Gastrocnemius medialis (tissue), 4 donors: ENCODE measurements at regions of chr12 and their contacts with region 1.

Region 1: DNA sequence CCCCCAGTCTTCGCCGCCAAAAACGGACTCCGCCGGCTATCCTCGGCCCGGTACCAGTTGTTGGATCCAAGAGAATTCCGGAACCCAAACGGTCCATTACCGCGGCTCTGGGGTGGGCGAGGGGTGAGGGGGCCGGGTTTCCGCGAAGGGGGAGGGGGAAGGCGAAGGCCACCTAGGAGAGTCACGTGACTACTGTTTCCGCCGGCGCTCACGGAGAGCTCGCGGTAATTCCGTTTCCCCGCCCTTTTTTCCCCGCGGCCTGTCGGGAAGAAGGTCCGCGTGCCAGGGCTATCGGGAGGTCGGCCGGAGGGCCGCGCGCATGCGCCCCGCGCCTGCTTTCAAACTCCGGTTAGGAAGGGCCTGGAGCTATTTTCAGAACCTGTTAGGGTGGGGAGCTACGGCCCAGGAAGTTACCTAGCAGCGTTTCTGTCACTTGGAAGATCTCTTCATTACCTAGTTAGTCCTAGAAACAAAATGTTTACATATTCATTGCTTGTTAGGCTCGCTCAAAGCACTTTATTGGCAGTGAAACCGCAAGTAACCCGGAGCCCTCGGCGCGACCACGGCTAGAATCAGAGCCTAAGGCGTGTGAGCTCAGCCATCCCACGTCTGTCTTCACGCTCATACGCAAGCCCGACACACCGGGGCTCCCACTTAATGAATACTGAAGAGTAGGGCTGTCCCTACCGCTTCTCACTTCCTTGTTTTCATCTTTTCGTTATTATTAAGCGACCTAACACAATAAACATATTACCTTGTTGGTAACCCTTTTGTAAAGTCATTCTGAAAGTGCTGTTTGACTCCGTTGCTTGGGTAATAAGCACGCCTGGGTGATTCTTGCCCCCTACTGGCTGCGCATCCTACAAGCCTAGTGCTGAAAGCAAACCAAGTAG is 624 bp upstream of the SBNO1 start:
- DNase-seq: peak; percentile 99
- ATAC-seq: peak; percentile 88 to 89
- H3K4me3 ChIP-seq: peak overlapping the region; percentile 74 to 84 (median 79)
- H3K27ac ChIP-seq: peak overlapping the region; percentile 89 to 99 (median 94)
- H3K4me1 ChIP-seq: peaks cover 7 to 24% of the 10 kb centered on the region in 2 donors
- H3K27me3 ChIP-seq: no peaks in the 10 kb centered on the region
- CTCF ChIP-seq: peak; percentile 54 to 81 (median 75)
- POLR2A ChIP-seq: peak; percentile 79 to 84

Region 2: GRCh38 chr12:122974274-122974891 is 390.9 kb before region 1 on chr12:
- in situ Hi-C with region 1: no loop called
- intact Hi-C with region 1: loop called (anchors 10 kb)
- DNase-seq: peak; percentile 97
- ATAC-seq: peak; percentile 97 to 98
- H3K4me3 ChIP-seq: peak overlapping the region; percentile 85 to 100 (median 91)
- H3K27ac ChIP-seq: peak overlapping the region; percentile 96 to 100 (median 98)
- H3K4me1 ChIP-seq: peaks cover 24 to 37% of the 10 kb centered on the region in 2 donors
- H3K27me3 ChIP-seq: no peaks in the 10 kb centered on the region
- CTCF ChIP-seq: peak in 1 of 5 experiments; percentile 12
- POLR2A ChIP-seq: no peak

Region 3: DNA sequence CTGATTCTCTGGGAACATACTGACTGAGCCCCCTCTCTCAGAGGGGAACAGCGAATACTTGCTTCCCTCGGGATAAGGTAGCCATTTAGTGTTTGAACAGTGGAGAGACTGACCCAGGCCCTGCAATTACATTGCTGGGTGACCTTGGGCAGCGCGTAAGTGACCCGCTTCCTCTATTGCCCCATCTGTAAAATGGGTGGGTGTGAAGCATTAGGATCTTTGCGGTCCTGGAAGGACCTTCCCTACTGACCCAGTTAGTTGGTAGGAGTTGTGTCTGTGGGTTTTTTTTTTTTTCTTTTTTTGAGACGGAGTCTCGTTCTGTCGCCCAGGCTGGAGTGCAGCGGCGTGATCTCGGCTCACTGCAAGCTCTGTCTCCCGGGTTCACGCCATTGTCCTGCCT is 17.4 kb after region 1 on chr12:
- in situ Hi-C with region 1: no loop called
- intact Hi-C with region 1: loop called (anchors 1 kb)
- DNase-seq: no peak
- ATAC-seq: no peak
- H3K4me3 ChIP-seq: no peak overlapping the region
- H3K27ac ChIP-seq: no peak overlapping the region
- H3K4me1 ChIP-seq: peaks cover 15 to 22% of the 10 kb centered on the region in 2 donors
- H3K27me3 ChIP-seq: no peaks in the 10 kb centered on the region
- CTCF ChIP-seq: no peak
- POLR2A ChIP-seq: no peak

Region 4: GRCh38 chr12:123457980-123458783 is 92.9 kb after region 1 on chr12 and contains the start of gene SNRNP35:
- in situ Hi-C with region 1: no loop called
- intact Hi-C with region 1: loop called (anchors 5 kb)
- DNase-seq: peak; percentile 48 to 71
- ATAC-seq: peak; percentile 86
- H3K4me3 ChIP-seq: peak within 1 kb of the TSS; percentile 63 to 98 (median 89)
- H3K27ac ChIP-seq: peak within 1 kb of the TSS; percentile 86 to 99 (median 98)
- H3K4me1 ChIP-seq: peaks cover 8 to 12% of the 10 kb centered on the region in 2 donors
- H3K27me3 ChIP-seq: no peaks in the 10 kb centered on the region
- CTCF ChIP-seq: no peak
- POLR2A ChIP-seq: peak; percentile 51 to 55
- total RNA-seq, gene SNRNP35: 22.6 to 40.4 (median 23.5) TPM

Region 5: DNA sequence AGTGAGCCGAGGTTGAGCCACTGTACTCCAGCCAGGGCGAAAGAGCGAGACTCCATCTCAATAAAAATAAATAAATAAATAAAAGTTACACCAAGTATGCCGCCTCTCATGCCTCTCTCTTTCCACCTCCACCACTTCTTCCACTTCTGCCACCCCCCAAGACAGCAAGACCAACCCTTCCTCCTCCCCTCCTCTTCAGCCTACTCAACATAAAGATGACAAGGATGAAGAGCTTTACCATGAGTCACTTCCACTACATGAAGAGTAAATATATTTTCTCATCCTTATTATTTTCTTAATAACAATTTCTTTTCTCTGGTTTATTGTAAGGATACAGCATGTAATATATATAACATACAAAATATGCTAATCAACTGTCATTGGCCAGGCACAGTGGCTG is 215.5 kb after region 1 on chr12:
- in situ Hi-C with region 1: loop called in 1 of 4 experiments (anchors 5 kb)
- intact Hi-C with region 1: loop called (anchors 1 kb)
- DNase-seq: no peak
- ATAC-seq: no peak
- H3K4me3 ChIP-seq: no peak overlapping the region
- H3K27ac ChIP-seq: peak overlapping the region in 2 of 4 donors; percentile 28 to 95
- H3K4me1 ChIP-seq: peaks cover 23 to 28% of the 10 kb centered on the region in 2 donors
- H3K27me3 ChIP-seq: no peaks in the 10 kb centered on the region
- CTCF ChIP-seq: no peak
- POLR2A ChIP-seq: no peak

Region 6: GRCh38 chr12:123713398-123713797 is 348.1 kb after region 1 on chr12:
- in situ Hi-C with region 1: no loop called
- intact Hi-C with region 1: loop called (anchors 5 kb)
- DNase-seq: no peak
- ATAC-seq: no peak
- H3K4me3 ChIP-seq: peak overlapping the region; percentile 77 to 98 (median 96)
- H3K27ac ChIP-seq: no peak overlapping the region
- H3K4me1 ChIP-seq: peaks cover 27 to 28% of the 10 kb centered on the region in 2 donors
- H3K27me3 ChIP-seq: no peaks in the 10 kb centered on the region
- CTCF ChIP-seq: no peak
- POLR2A ChIP-seq: no peak